Cardiac septum (tissue), 1 donor: ENCODE measurements at regions of chr17 and their contacts with region 1.

Region 1: DNA sequence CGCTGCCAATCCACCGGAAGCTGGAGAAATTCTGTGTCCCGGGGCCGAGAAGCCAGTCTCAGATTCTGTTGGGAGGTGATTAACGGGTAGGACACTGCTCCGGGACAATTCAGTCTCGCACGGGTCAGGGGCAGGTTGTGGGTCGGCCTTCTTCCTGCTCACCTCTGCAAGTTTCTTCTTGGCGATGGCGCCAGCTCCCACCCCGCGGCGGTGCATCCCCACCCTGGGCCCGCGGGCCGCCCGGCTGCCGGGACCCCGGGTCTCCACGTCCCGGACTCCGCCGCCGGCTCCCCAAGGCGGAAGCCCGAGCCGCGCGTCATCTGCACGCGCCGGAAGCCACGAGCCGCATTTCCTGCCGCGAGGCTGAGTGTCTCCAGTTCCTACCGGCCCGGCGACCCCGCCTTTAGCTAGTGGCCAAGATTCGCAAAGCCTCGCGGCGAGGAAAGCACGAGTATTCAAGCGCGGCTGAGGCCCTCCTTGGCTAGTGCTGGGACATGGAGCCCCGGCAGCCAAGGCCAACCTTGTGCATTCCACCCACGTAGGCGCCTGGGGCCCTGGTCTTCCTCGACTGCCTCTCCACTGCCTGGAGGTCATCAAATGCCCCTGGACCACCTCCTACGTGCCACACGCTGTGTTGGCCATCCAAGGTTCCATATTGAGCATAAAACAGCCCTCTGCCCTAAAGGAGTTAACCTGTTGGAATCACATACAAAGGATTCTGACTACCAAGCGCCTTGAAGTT is at the start of gene SNF8:
- DNase-seq: peak; percentile 95
- total RNA-seq, gene SNF8: 76.1 TPM

Region 2: DNA sequence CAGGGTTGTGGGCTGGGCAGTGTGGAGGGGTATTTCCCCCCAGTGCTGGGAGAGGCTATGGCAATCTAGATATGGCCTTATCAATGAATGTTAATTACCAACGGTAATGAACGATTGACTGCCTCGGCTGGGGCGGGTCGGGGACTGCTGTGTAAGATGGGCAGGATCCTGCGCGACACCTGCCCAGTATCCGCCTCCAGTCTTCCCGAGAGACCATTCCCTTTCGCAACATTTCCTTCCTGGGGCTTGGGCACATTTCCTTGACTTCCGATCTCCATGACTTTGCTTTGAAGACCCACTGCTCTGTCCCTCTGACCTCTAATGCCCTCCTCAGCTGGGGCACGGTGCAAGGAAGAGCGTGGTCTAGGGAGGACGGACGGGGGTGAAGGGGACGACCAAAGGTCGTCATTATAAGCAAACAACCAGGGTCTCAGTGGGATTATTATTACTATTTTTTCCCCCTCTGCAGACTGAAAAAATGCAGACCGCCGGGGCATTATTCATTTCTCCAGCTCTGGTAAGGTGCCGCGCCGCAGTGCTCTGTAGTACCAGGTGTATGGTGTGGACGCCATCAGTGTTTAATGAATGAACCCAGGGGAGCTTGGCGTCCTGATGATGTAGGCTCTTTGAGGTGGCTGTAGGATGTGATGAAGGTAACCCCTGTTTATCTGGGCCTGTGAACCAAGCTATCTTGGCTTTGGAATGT is 51.6 kb before region 1 on chr17:
- intact Hi-C with region 1: loop called (anchors 2 kb)
- DNase-seq: no peak

Region 3: GRCh38 chr17:49108318-49108717 is 163.6 kb after region 1 on chr17:
- intact Hi-C with region 1: no loop called
- DNase-seq: no peak